ENCODE measurements at regions of chr7 and their contacts with region 1.

Region 1: DNA sequence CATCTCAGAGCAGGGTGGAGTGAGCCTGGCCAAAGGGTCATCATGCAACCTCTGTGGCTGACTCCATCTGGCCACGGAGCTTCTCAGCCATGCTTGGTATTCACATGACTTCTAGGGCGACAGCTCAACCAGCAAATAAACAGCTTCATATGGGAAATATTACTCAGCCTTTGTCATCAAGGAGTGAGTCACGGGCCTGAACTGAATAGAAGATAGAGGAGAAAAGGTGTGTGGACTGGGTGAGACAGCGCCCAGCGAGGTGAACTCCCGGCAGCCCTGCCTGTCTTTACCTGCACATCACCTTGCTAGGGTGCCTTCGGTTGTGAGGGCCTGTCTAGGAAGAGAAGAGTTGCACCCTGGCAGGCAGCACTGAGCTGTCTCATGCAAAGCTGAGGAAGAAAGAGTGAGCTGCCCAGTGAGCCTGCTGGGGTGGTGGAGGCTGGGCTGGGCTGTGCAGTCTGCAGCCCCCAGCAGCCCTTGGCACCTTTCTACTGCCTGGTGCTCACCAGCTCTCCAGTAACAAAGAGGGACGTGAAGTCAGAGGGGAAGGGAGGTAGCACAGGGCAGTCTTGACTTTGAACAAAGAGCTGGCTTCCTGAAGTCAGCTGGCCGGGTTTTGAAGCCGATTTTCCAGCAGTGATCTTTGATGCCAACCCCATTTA is 114.2 kb downstream of the EGFR start:
- DNase-seq: peak in 1 of 2 donors; percentile 95
- H3K4me3 ChIP-seq: no peak overlapping the region
- H3K27ac ChIP-seq: peak overlapping the region; percentile 91
- H3K4me1 ChIP-seq: peaks cover 76% of the 10 kb centered on the region
- H3K27me3 ChIP-seq: no peaks in the 10 kb centered on the region
- CTCF ChIP-seq: no peak
- POLR2A ChIP-seq: no peak

Region 2: DNA sequence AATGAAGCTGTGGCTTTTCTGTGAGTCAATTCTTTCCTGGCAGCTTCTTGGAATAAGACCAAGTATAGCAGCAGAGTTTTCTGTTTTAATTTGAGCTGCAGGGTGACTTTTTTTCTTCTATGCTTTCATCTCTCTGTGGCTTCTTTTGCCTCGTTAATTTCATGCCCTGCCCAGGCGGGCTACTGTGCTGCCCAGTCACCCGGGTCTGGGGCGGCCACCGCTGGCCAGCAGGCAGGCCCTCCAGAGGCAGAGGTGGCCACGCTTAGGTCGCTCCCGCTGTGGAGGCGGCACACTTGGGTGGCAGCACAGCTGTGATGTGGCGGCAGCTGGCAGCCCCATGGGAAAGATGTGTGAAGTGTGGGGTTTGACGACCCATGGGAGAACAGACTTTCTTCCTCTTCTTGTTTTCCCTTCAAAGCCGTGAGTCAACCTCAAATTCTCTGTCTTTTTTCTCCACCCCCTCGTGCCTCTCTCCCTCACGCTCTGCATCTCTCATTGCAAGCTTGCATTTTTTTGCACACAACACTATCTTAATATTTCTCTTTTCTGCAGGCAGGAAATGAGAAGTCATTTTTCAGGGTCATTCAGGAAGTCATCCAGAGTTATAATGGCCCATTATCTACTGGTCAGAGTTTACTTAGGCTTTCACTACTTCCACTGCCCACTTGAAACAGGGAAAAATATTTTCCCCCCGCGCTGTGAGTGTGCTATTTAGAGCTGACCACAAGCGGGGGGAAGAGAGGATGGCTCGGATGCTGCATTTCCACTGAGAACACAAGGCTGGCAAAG is 46.4 kb before region 1 on chr7:
- intact Hi-C with region 1: loop called (anchors 10 kb)
- DNase-seq: peak in 1 of 2 donors; percentile 84
- H3K4me3 ChIP-seq: peak overlapping the region in 1 of 2 donors; percentile 38
- H3K27ac ChIP-seq: peak overlapping the region; percentile 79
- H3K4me1 ChIP-seq: peaks cover 47% of the 10 kb centered on the region
- H3K27me3 ChIP-seq: no peaks in the 10 kb centered on the region
- CTCF ChIP-seq: no peak
- POLR2A ChIP-seq: no peak

Region 3: DNA sequence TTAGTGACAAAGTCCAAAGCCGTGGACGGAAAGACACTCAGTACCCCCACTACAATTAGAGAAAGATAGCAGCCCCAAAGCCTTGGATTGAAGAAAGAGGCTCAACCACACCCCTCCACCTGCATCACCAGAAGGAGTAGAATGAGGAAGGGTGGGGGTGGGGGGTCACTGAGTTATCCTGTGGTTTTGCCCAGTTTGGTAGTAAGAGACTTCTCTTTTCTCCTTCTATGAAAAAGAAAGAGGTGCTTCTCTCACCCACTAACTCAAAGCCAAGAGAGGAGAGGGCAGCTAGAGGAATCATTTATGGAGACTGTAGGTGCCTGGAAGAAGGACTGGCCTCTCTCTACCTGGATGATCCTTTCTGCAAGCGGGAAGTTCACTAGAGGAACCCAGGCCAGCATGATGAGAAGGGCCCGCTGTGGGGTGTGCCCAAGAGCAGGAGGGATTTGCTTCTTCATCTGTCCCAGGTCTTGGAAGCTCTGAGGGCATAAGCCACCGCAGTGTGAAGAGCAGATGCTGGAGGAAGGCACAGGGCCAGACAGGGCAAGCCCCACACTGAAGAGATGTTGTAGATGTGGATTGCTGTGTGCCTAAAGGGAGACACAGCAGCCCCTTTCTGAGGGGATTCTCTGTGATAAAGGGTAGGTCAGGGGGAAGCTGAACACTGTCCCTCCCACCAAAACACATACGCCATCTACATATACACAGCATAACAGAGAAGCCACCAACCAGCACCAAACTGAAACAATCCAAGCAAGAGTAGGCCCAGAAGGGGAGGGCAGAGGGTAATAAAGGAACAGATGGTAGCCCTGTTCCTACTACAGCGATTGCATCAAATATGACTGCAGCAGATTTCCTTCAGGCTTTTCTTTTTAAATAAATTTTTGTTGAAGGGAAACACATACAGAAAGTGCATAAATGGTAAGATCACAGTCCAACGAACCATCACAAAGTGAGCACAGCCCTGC is 206.3 kb after region 1 on chr7:
- intact Hi-C with region 1: no loop called
- DNase-seq: no peak
- H3K4me3 ChIP-seq: no peak overlapping the region
- H3K27ac ChIP-seq: no peak overlapping the region
- H3K4me1 ChIP-seq: no peaks in the 10 kb centered on the region
- H3K27me3 ChIP-seq: no peaks in the 10 kb centered on the region
- CTCF ChIP-seq: no peak
- POLR2A ChIP-seq: no peak

Measured in vagina (tissue), 2 donors.